ENCODE measurements at regions of chr5 and their contacts with region 1.

Region 1: DNA sequence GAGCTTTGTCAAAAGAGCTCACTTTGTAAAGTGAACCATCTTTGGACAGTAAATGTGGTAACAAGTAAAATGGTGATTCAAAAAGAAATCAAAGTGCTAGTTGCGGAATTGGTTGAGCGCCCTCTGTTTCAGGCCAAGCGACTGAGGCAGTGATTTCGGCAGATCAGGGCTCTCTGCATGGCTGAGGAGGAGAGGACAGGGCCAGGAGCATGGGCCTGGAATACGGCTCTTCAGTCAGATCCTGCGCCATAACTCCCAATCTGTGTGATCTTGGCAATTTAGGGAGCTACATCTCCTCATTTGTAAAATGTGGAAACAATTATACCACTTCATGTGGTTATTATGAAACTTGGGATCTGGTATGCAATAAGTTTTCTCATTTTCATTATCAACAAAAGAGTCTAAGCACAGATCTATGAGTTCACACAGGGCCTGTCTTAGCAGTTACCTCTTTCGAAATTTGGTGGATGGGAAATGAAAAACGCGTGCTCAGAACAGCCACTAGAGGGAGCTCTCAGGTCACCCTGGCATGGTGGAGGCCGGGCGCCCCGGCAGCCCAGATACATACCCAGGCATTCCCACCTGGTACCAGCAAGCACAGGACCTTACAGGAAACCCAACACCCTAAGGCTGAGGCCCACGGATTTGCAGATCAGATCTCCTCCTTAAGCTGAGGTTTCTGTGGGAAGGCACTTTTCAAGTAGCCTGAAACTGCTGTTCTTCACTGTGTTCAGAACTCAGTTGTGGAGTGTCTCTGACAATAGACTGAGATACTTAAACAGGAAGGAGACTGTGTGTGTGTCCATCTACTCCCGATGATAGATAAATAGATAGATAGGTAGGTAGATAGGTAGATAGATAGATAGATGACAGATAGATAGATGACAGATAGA is 303.7 kb downstream of the RAB3C start:
- DNase-seq: peak; percentile 57
- H3K4me3 Mint-ChIP-seq: peak overlapping the region; percentile 28
- H3K27ac Mint-ChIP-seq: peak overlapping the region; percentile 85
- H3K4me1 Mint-ChIP-seq: peaks cover 29% of the 10 kb centered on the region
- H3K27me3 Mint-ChIP-seq: peaks cover 11% of the 10 kb centered on the region

Region 2: DNA sequence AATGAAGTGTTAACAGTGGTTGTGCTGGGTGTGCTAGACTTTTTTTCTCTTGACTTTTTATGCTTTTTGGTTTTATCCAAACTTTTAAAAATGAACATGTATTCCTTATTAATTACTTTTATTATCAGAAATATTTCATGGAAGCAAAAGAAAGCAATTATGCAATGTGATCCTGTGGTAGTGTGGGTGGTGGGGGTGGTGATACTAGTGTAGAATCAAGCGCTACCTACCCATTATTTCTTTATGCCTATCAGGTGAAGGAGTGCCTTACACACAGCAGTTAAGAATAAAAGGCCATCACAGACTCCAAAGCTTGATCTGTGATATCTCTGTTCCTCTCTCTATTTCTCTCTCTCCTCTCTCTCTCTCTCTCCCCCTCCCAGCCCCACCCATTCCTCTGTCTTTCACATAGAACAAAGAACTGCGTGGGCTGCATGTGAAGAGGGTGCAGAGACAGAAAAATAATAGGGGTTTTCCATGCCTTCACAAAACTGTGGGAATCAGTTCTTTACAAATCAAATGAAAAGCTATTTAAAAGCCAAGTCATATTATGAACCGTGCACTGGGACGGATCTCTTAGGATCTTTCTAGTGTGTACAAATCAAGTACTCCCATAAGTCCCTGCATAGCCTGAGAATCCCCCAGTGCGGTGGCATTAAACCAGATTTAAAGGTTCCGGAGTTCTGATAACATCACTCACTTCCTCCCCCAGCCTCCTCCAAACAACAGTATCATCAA is 47.5 kb after region 1 on chr5:
- intact Hi-C with region 1: loop called (anchors 5 kb)
- DNase-seq: peak; percentile 21
- H3K4me3 Mint-ChIP-seq: peak overlapping the region; percentile 8
- H3K27ac Mint-ChIP-seq: no peak overlapping the region
- H3K4me1 Mint-ChIP-seq: peaks cover 12% of the 10 kb centered on the region
- H3K27me3 Mint-ChIP-seq: peaks cover 13% of the 10 kb centered on the region

Region 3: GRCh38 chr5:59007460-59008063 is 121.0 kb after region 1 on chr5:
- intact Hi-C with region 1: loop called (anchors 2 kb)
- DNase-seq: no peak
- H3K4me3 Mint-ChIP-seq: no peak overlapping the region
- H3K27ac Mint-ChIP-seq: no peak overlapping the region
- H3K4me1 Mint-ChIP-seq: peaks cover 54% of the 10 kb centered on the region
- H3K27me3 Mint-ChIP-seq: no peaks in the 10 kb centered on the region

Region 4: GRCh38 chr5:59099270-59099994 is 212.9 kb after region 1 on chr5:
- intact Hi-C with region 1: loop called (anchors 2 kb)
- DNase-seq: peak; percentile 62
- H3K4me3 Mint-ChIP-seq: peak overlapping the region; percentile 22
- H3K27ac Mint-ChIP-seq: peak overlapping the region; percentile 85
- H3K4me1 Mint-ChIP-seq: peaks cover 80% of the 10 kb centered on the region
- H3K27me3 Mint-ChIP-seq: no peaks in the 10 kb centered on the region

Region 5: DNA sequence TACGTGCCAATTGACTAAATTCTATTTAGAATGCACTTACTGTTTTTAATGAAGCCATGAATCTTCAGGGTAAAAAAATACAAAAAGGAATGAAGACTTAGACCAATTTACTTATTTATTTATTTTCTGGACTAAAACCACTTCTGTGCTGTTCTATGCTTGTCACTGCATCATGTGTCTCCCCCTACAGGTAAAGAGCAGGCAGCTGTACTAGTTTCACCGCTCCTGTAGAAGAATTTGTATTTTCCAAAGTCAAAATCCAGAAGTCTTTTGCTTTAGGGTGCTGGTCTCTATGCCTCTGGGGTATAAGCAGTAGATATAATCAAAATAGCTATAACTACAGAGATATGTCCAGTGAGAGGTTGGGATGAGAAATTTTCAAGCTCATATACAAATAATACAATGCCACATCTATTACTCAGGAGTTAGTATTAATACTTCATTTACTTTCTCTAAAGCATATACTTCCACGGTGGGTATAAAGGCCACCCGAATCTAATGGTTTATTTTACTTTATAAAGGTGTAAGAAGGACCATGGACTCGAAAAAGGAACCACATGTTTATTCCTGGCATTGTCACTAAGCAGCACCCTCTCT is 287.8 kb after region 1 on chr5:
- intact Hi-C with region 1: loop called (anchors 1 kb)
- DNase-seq: no peak
- H3K4me3 Mint-ChIP-seq: no peak overlapping the region
- H3K27ac Mint-ChIP-seq: no peak overlapping the region
- H3K4me1 Mint-ChIP-seq: peaks cover 43% of the 10 kb centered on the region
- H3K27me3 Mint-ChIP-seq: no peaks in the 10 kb centered on the region

Region 6: DNA sequence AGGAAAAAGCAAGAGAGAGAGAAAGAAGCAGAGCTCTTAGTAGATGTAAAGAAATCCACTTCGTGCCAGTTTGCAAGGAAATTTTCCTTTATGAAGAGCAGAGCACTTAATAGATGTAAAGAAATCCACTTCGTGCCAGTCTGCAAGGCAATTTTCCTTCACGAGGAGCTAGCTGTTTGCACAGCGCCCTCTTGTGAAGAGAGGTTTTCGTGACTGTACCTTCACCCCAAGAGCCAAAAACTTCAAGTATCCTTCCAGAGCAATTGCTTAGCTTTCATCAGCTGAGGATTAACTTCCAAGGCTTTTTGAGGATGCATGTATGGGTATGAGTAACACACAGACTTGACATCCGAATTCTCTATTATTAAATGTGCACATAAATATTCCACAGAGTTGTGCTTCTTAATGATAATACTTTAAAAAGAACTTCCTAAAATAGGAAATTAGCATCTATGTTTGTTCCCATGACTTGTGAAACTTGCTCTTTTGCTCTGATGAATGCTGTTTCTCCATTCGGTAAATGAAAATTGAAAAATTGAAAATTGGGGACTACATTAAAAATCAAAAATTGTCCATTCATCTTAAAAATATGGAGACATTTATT is 481.3 kb after region 1 on chr5:
- intact Hi-C with region 1: loop called (anchors 2 kb)
- DNase-seq: peak; percentile 22
- H3K4me3 Mint-ChIP-seq: no peak overlapping the region
- H3K27ac Mint-ChIP-seq: no peak overlapping the region
- H3K4me1 Mint-ChIP-seq: peaks cover 3% of the 10 kb centered on the region
- H3K27me3 Mint-ChIP-seq: peaks cover 10% of the 10 kb centered on the region

Region 7: GRCh38 chr5:59799668-59800346 is 913.2 kb after region 1 on chr5:
- intact Hi-C with region 1: loop called (anchors 10 kb)
- DNase-seq: no peak
- H3K4me3 Mint-ChIP-seq: no peak overlapping the region
- H3K27ac Mint-ChIP-seq: no peak overlapping the region
- H3K4me1 Mint-ChIP-seq: peaks cover 4% of the 10 kb centered on the region
- H3K27me3 Mint-ChIP-seq: peaks cover 10% of the 10 kb centered on the region

Measured in activated T-helper 2 cell treated with anti-CD3 and anti-CD28 coated beads, Interferon-gamma antibody, Interleukin-2, Interleukin-4, amounts not matched to agents 10 μg/mL and 5 μg/mL and 100 μg/mL, durations not matched to agents 14 hours and 24 hours and 36 hours (primary cell).